Esophagus muscularis mucosa (tissue), 4 donors: ENCODE measurements at regions of chr7 and their contacts with region 1.

Region 1: DNA sequence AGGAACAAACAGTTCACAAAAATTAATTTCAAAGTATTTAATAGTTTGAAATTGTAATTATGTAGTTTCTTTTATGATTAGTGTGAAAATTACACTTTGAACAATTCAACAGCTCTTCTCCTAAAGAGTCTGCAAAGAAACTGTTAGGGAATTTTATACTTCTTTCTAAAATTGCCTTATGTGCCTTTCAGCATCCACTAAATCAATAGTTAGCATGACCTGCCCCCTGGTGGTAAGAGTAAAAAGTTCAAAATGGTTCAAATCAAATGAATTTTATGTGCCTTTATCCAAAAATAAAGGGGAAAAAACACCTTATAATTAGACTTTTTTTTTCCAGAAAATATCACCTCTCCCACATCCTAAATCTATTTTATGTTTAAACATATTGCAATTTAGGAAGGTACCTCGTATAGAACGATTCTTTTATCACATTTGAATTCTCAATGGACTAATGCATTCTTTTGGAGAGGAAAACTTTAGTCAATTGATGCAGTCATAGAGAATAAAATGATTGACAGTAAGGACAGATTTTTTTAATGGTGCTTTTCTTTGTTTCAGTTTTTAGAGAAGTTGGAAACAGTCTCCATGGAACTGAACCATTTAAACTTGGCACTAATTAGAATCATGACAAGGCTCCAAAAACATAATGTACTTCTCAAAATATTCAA is 163.7 kb downstream of the SEMA3D start:
- DNase-seq: no peak
- H3K4me3 ChIP-seq: no peak overlapping the region
- H3K27ac ChIP-seq: no peak overlapping the region
- H3K4me1 ChIP-seq: peaks cover 0 to 7% (median 2%) of the 10 kb centered on the region in 4 donors
- H3K27me3 ChIP-seq: no peaks in the 10 kb centered on the region
- CTCF ChIP-seq: peak; percentile 62 to 80 (median 70)
- EP300 ChIP-seq: no peak
- POLR2A ChIP-seq: no peak

Region 2: DNA sequence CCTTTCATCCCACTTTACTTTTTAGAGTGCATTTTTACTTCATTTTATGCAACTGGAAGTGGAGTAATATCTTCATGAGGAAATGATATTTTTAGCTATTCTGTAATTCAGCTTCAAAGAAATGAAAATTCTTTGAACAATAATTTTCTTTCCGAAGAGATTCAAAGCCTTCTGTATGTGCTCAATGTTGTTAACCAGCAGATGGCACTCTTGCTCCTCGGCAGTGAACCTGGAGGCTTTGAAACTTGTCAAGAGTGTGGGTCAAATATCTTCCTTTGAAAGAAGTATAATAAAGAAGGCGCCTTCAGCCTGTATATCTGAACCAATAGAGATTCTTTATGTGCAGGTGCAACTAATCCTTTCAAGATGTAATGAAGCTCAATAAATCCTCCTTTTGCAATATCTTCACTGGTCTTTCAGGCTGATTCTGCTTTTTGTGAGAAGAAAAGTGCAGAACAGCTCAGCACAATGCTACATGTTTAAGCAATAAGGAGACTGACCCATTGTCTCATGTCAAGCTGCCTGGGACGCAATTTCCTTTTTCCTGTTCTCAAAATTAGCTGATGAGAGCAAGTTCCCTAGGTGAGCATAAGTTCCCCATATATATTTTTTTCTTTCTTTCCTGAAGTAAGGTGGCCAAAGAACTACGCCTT is 1087.0 kb before region 1 on chr7:
- intact Hi-C with region 1: loop called (anchors 2 kb)
- DNase-seq: no peak
- H3K4me3 ChIP-seq: no peak overlapping the region
- H3K27ac ChIP-seq: no peak overlapping the region
- H3K4me1 ChIP-seq: peaks cover 3 to 9% (median 6%) of the 10 kb centered on the region in 4 donors
- H3K27me3 ChIP-seq: no peaks in the 10 kb centered on the region
- CTCF ChIP-seq: peak; percentile 76 to 88 (median 86)
- EP300 ChIP-seq: no peak
- POLR2A ChIP-seq: no peak

Region 3: DNA sequence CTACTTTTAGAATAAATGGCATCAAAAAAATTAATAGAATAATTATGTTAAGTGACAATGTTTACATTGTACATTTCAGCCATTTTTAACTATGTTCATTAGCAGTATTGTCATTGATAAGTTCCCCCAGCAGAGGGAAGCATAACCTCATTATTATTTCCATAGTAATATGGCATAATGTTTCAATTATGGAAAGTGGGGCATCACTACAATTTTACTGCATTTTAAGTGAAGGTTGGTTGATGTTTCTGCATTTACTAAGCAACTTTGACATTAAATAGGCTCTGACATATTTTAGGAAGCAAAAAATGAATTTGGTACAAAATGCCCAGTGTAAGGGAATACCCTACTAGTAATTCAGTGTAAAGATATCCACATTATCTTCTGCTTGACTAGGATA is 1046.9 kb before region 1 on chr7:
- intact Hi-C with region 1: loop called (anchors 5 kb)
- DNase-seq: no peak
- H3K4me3 ChIP-seq: no peak overlapping the region
- H3K27ac ChIP-seq: no peak overlapping the region
- H3K4me1 ChIP-seq: peaks cover 0 to 7% (median 2%) of the 10 kb centered on the region in 4 donors
- H3K27me3 ChIP-seq: no peaks in the 10 kb centered on the region
- CTCF ChIP-seq: peak; percentile 67 to 69 (median 69)
- EP300 ChIP-seq: no peak
- POLR2A ChIP-seq: no peak

Region 4: DNA sequence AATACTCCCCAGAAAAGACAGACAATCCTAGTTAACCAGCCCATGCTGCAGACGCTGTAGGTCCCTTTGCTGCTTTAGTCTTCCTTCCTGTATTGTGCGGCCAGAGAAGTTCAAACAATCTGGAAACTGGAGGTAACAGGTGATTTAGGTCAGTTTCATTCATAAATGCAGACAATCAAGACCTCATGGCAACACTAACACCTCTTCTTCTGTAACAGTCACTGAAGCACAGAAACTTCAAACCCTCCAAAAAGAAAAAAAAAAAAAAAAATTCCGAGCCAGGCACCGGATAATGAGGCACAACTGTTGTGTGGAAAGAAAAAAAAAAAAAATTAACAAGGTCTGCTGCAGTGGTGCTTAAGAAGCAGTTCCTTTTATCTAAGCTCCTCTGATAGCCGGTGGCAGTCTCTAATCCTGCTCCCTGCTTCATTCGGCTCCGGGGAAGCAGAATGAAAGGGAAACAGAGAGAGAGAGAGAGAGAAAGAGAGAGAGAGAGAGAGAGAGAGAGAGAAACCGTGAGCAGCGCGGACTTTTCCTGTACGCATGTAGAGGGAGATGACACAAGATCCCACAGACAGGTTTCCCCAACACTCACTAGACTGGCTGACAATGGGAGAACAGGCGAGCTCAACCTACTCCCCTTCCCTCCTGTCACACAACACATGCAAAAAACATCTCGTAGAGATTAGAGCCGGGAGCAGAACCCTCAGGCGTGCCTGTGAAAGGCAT is 828.5 kb before region 1 on chr7 and contains the start of gene SEMA3A:
- intact Hi-C with region 1: loop called (anchors 10 kb)
- DNase-seq: no peak
- H3K4me3 ChIP-seq: peak within 1 kb of the TSS; percentile 56 to 67 (median 62)
- H3K27ac ChIP-seq: peak within 1 kb of the TSS; percentile 77 to 83 (median 81)
- H3K4me1 ChIP-seq: peaks cover 8 to 37% (median 17%) of the 10 kb centered on the region in 4 donors
- H3K27me3 ChIP-seq: no peaks in the 10 kb centered on the region
- CTCF ChIP-seq: peak; percentile 22 to 29 (median 27)
- EP300 ChIP-seq: no peak
- POLR2A ChIP-seq: no peak
- total RNA-seq, gene SEMA3A: 27.8 to 39.0 (median 34.5) TPM

Region 5: GRCh38 chr7:84490661-84491060 is 532.5 kb before region 1 on chr7:
- intact Hi-C with region 1: loop called (anchors 5 kb)
- DNase-seq: no peak
- H3K4me3 ChIP-seq: no peak overlapping the region
- H3K27ac ChIP-seq: no peak overlapping the region
- H3K4me1 ChIP-seq: peaks cover 0 to 13% (median 6%) of the 10 kb centered on the region in 4 donors
- H3K27me3 ChIP-seq: no peaks in the 10 kb centered on the region
- CTCF ChIP-seq: peak; percentile 50 to 54 (median 53)
- EP300 ChIP-seq: no peak
- POLR2A ChIP-seq: no peak